ENCODE measurements at regions of chr5 and their contacts with region 1.

Region 1: GRCh38 chr5:131382407-131383395 is 118.8 kb downstream of the CDC42SE2 start:
- DNase-seq: peak; percentile 87
- ATAC-seq: peak; percentile 72
- H3K4me3 ChIP-seq: peak overlapping the region in 1 of 5 experiments; percentile 15
- H3K4me3 Mint-ChIP-seq: peak overlapping the region; percentile 68
- H3K27ac ChIP-seq: peak overlapping the region; percentile 99
- H3K27ac Mint-ChIP-seq: peak overlapping the region; percentile 86
- H3K4me1 ChIP-seq: peaks cover 52 to 55% of the 10 kb centered on the region in 2 donors
- H3K4me1 Mint-ChIP-seq: peaks cover 58% of the 10 kb centered on the region
- H3K27me3 ChIP-seq: no peaks in the 10 kb centered on the region
- H3K27me3 Mint-ChIP-seq: no peaks in the 10 kb centered on the region
- CTCF ChIP-seq: peak; percentile 75

Region 2: GRCh38 chr5:131165119-131165727 is 217.5 kb before region 1 on chr5 and contains the start of gene HINT1:
- CTCF ChIA-PET with region 1: interaction called, 34 read pairs
- POLR2A ChIA-PET with region 1: no interaction called
- intact Hi-C with region 1: loop called (anchors 1 kb)
- DNase-seq: peak; percentile 96
- ATAC-seq: peak; percentile 80
- H3K4me3 ChIP-seq: peak within 1 kb of the TSS; percentile 69 to 96 (median 94)
- H3K4me3 Mint-ChIP-seq: peak within 1 kb of the TSS; percentile 90
- H3K27ac ChIP-seq: peak within 1 kb of the TSS; percentile 82 to 92
- H3K27ac Mint-ChIP-seq: peak within 1 kb of the TSS; percentile 98
- H3K4me1 ChIP-seq: peaks cover 20 to 23% of the 10 kb centered on the region in 2 donors
- H3K4me1 Mint-ChIP-seq: peaks cover 41% of the 10 kb centered on the region
- H3K27me3 ChIP-seq: no peaks in the 10 kb centered on the region
- H3K27me3 Mint-ChIP-seq: no peaks in the 10 kb centered on the region
- CTCF ChIP-seq: no peak
- total RNA-seq, gene HINT1: 180 and 206 TPM in 2 replicates

Region 3: DNA sequence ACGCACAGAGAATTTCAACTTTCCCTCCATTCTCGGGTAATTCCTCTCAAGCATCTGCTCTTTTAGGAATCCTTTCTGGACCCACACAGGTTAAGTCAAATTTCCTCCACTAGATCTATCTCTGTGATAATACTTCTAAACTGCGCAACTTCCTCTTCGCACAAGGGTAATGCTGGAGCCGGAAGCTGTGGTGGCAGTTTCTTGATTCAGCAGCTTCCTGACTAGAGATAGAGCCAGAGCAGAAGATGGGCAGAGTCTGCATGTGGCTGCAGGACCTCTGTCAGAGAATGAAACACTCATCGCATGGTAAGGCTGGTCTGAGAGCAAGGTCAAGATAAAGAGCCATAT is 129.9 kb before region 1 on chr5:
- CTCF ChIA-PET with region 1: interaction called, 13 read pairs
- POLR2A ChIA-PET with region 1: interaction called, 4 read pairs
- intact Hi-C with region 1: no loop called
- DNase-seq: peak; percentile 89
- ATAC-seq: peak; percentile 86
- H3K4me3 ChIP-seq: peak overlapping the region; percentile 39 to 55 (median 52)
- H3K4me3 Mint-ChIP-seq: peak overlapping the region; percentile 85
- H3K27ac ChIP-seq: peak overlapping the region; percentile 90 to 92
- H3K27ac Mint-ChIP-seq: peak overlapping the region; percentile 96
- H3K4me1 ChIP-seq: peaks cover 55 to 70% of the 10 kb centered on the region in 2 donors
- H3K4me1 Mint-ChIP-seq: peaks cover 72% of the 10 kb centered on the region
- H3K27me3 ChIP-seq: no peaks in the 10 kb centered on the region
- H3K27me3 Mint-ChIP-seq: no peaks in the 10 kb centered on the region
- CTCF ChIP-seq: no peak

Region 4: GRCh38 chr5:131338051-131338453 is 44.6 kb before region 1 on chr5:
- CTCF ChIA-PET with region 1: interaction called, 3 read pairs
- POLR2A ChIA-PET with region 1: no interaction called
- intact Hi-C with region 1: loop called (anchors 5 kb)
- DNase-seq: no peak
- ATAC-seq: no peak
- H3K4me3 ChIP-seq: no peak overlapping the region
- H3K4me3 Mint-ChIP-seq: no peak overlapping the region
- H3K27ac ChIP-seq: no peak overlapping the region
- H3K27ac Mint-ChIP-seq: no peak overlapping the region
- H3K4me1 ChIP-seq: peaks cover 4 to 9% of the 10 kb centered on the region in 2 donors
- H3K4me1 Mint-ChIP-seq: peaks cover 62% of the 10 kb centered on the region
- H3K27me3 ChIP-seq: no peaks in the 10 kb centered on the region
- H3K27me3 Mint-ChIP-seq: no peaks in the 10 kb centered on the region
- CTCF ChIP-seq: no peak

Region 5: DNA sequence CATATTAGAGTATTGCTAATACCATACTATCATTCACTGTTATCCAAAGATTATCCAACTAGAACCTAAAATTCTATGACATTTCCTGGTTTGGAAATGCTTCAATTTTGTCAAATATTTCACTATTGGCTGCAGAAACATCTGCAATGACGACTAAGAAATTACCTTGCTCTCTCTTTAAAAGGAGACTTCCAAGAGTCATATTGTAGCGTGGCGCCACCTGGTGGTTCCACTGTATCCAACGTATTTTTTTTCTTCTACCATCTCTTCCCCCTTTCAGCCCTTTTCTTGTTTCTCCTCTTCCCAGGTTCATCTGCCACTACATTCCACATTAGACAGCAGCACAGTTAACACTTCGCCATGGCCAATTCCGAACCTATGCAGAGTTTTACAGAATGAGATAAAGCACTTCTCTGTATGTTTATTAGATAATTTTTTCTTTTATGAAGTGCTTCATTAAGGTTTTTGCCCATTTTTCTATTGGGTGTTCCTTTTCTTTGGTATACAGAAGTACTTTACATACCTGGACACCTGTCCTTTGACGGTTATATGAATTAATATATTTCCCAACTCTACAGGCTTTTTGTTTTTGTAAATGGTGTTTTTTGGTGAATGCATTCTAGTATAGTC is 34.7 kb after region 1 on chr5:
- CTCF ChIA-PET with region 1: interaction called, 14 read pairs
- POLR2A ChIA-PET with region 1: no interaction called
- intact Hi-C with region 1: no loop called
- DNase-seq: peak; percentile 82
- ATAC-seq: peak; percentile 63
- H3K4me3 ChIP-seq: peak overlapping the region in 1 of 5 experiments; percentile 43
- H3K4me3 Mint-ChIP-seq: peak overlapping the region; percentile 54
- H3K27ac ChIP-seq: no peak overlapping the region
- H3K27ac Mint-ChIP-seq: no peak overlapping the region
- H3K4me1 ChIP-seq: peaks cover 18 to 19% of the 10 kb centered on the region in 2 donors
- H3K4me1 Mint-ChIP-seq: peaks cover 32% of the 10 kb centered on the region
- H3K27me3 ChIP-seq: no peaks in the 10 kb centered on the region
- H3K27me3 Mint-ChIP-seq: no peaks in the 10 kb centered on the region
- CTCF ChIP-seq: peak; percentile 97

Region 6: DNA sequence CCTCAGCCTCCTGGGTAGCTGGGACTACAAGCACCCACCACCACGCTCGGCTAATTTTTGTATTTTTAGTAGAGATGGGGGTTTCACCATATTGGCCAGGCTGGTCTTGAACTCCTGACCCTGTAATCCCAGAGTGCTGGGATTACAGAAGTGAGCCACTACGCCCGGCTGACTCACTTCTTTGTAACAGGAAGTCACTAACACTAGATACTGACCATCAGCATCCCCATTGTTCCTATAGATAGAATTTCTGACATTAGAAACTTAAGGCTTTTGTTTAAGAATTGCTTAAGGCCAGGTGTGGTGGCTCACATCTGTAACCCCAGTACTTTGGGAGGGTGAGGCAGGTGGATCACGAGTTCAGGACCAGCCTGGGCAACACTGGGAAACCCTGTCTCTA is 1533.0 kb after region 1 on chr5:
- CTCF ChIA-PET with region 1: no interaction called
- POLR2A ChIA-PET with region 1: no interaction called
- intact Hi-C with region 1: no loop called
- DNase-seq: no peak
- ATAC-seq: no peak
- H3K4me3 ChIP-seq: no peak overlapping the region
- H3K4me3 Mint-ChIP-seq: no peak overlapping the region
- H3K27ac ChIP-seq: no peak overlapping the region
- H3K27ac Mint-ChIP-seq: no peak overlapping the region
- H3K4me1 ChIP-seq: no peaks in the 10 kb centered on the region
- H3K4me1 Mint-ChIP-seq: peaks cover 3% of the 10 kb centered on the region
- H3K27me3 ChIP-seq: no peaks in the 10 kb centered on the region
- H3K27me3 Mint-ChIP-seq: no peaks in the 10 kb centered on the region
- CTCF ChIP-seq: no peak